HEK293T (cell line): ENCODE measurements at regions of chr15 and their contacts with region 1.

Region 1: GRCh38 chr15:85402195-85402881 is 21.9 kb downstream of the AKAP13 start:
- DNase-seq: no peak

Region 2: GRCh38 chr15:85330901-85331588 is 71.3 kb before region 1 on chr15:
- CTCF ChIA-PET with region 1: interaction called, 12 read pairs
- POLR2A ChIA-PET with region 1: interaction called, 3 read pairs
- DNase-seq: peak; percentile 81

Region 3: GRCh38 chr15:85380217-85380811 is 22.0 kb before region 1 on chr15 and contains the start of gene AKAP13:
- CTCF ChIA-PET with region 1: interaction called, 3 read pairs
- POLR2A ChIA-PET with region 1: interaction called, 10 read pairs
- DNase-seq: peak; percentile 98

Region 4: DNA sequence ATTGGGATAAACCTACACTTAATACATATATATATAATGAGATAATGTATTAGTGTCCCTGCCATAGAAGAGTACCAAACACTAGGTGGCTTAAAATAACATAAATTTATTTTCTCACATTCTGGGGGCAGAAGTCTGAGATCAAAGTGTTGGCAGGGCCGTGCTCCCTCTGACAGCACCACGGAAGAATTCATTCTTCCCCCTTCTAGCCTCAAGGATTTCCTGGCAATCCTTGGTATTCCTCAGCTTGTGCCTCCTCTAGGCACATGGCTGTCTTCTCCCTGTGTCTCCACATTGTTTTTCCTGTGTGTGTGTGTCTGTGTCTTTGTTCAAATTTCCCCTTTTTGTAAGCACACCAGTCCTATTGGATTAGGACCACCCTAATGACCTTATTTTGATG is 562.1 kb after region 1 on chr15:
- CTCF ChIA-PET with region 1: no interaction called
- POLR2A ChIA-PET with region 1: no interaction called
- DNase-seq: no peak